ENCODE measurements at regions of chr14 and their contacts with region 1.

Region 1: DNA sequence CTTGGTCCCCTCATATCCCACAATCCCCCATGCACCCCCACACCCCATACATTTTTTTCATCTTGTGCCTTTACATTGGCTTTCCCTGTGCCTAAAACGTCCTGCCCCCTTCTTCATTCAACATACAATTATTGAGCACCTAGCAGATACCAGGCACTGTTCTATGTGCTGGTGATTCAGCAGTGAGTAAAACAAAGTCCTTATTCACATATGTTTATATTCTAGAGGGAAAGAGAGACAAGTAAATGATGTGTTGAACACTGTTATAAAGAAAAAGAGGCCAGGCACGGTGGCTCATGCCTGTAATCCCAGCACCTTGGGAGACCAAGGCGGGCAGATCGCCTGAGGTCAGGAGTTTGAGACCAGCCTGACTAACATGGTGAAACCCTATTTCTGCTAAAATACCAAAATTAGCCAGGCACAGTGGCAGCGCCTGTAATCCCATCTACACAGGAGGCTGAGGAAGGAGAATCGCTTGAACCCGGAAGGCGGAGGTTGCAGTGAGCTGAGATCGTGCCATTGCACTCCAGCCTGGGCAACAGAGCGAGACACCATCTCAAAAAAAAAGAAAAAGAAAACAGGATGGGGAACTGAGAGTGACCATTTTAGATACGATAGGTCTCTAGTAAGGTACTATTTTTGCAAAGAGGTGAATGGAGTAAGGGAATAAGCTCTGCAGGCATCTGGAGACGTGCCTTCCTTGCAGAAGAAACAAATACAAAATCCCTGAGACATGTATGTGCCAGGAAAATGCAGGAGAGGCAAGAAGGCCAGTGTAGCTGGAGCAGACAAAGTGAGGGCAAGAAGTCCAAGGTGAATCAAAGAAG is 12.2 kb downstream of the SLC7A7 start:
- DNase-seq: no peak
- ATAC-seq: no peak
- H3K4me3 ChIP-seq: no peak overlapping the region
- H3K4me3 Mint-ChIP-seq: no peak overlapping the region
- H3K27ac ChIP-seq: no peak overlapping the region
- H3K27ac Mint-ChIP-seq: no peak overlapping the region
- H3K4me1 ChIP-seq: no peaks in the 10 kb centered on the region
- H3K4me1 Mint-ChIP-seq: no peaks in the 10 kb centered on the region
- H3K27me3 ChIP-seq: peaks cover 0 to 5% of the 10 kb centered on the region in 2 experiments
- H3K27me3 Mint-ChIP-seq: peaks cover 39% of the 10 kb centered on the region
- CTCF ChIP-seq: no peak

Region 2: DNA sequence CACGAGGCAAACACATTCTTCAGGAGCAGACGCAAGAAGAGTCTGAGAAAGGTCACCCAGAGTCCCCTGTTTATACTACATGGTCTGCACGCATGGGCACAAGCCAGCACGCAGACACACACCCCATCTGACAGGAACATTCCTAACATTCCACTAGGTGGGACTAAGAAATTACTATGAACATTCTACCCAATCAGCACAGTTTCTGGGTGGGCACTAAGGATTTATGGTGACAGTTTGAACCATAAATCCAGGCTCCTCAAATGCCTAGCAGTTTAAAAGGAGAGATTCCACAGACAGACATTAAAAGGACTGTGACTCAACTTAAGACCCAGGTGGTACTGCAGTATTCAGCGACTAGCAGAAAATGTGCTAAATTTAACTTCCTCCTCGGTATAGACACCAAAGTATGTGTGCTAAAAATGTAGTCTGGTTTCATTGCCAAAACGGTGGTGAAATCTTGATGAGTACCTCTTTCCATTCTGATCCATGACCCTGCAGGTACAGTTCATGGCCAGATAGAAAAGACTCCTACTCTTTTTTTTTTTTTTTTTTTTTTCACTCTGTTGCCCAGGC is 188.8 kb before region 1 on chr14:
- CTCF ChIA-PET with region 1: no interaction called
- POLR2A ChIA-PET with region 1: no interaction called
- intact Hi-C with region 1: loop called in 1 of 2 experiments (anchors 10 kb)
- DNase-seq: no peak
- ATAC-seq: no peak
- H3K4me3 ChIP-seq: no peak overlapping the region
- H3K4me3 Mint-ChIP-seq: no peak overlapping the region
- H3K27ac ChIP-seq: no peak overlapping the region
- H3K27ac Mint-ChIP-seq: no peak overlapping the region
- H3K4me1 ChIP-seq: no peaks in the 10 kb centered on the region
- H3K4me1 Mint-ChIP-seq: no peaks in the 10 kb centered on the region
- H3K27me3 ChIP-seq: no peaks in the 10 kb centered on the region
- H3K27me3 Mint-ChIP-seq: no peaks in the 10 kb centered on the region
- CTCF ChIP-seq: no peak

Region 3: GRCh38 chr14:22740020-22740419 is 63.1 kb before region 1 on chr14:
- CTCF ChIA-PET with region 1: no interaction called
- POLR2A ChIA-PET with region 1: no interaction called
- intact Hi-C with region 1: loop called in 1 of 2 experiments (anchors 5 kb)
- DNase-seq: no peak
- ATAC-seq: no peak
- H3K4me3 ChIP-seq: no peak overlapping the region
- H3K4me3 Mint-ChIP-seq: no peak overlapping the region
- H3K27ac ChIP-seq: no peak overlapping the region
- H3K27ac Mint-ChIP-seq: no peak overlapping the region
- H3K4me1 ChIP-seq: no peaks in the 10 kb centered on the region
- H3K4me1 Mint-ChIP-seq: peaks cover 4% of the 10 kb centered on the region
- H3K27me3 ChIP-seq: no peaks in the 10 kb centered on the region
- H3K27me3 Mint-ChIP-seq: no peaks in the 10 kb centered on the region
- CTCF ChIP-seq: no peak

Region 4: GRCh38 chr14:22838631-22839041 is 35.6 kb after region 1 on chr14:
- CTCF ChIA-PET with region 1: no interaction called
- POLR2A ChIA-PET with region 1: no interaction called
- intact Hi-C with region 1: no loop called
- DNase-seq: no peak
- ATAC-seq: no peak
- H3K4me3 ChIP-seq: no peak overlapping the region
- H3K4me3 Mint-ChIP-seq: no peak overlapping the region
- H3K27ac ChIP-seq: no peak overlapping the region
- H3K27ac Mint-ChIP-seq: no peak overlapping the region
- H3K4me1 ChIP-seq: peaks cover 21% of the 10 kb centered on the region
- H3K4me1 Mint-ChIP-seq: peaks cover 16% of the 10 kb centered on the region
- H3K27me3 ChIP-seq: peaks cover 23 to 24% of the 10 kb centered on the region in 2 experiments
- H3K27me3 Mint-ChIP-seq: peaks cover 33% of the 10 kb centered on the region
- CTCF ChIP-seq: no peak

Measured in CD4-positive, alpha-beta T cell (primary cell).